Activated T-helper 1 cell treated with anti-CD3 and anti-CD28 coated beads, Interleukin-12 subunit alpha, Interleukin-12 subunit beta, Interleukin-2, Interleukin-4 antibody, amounts not matched to agents 30 ng/mL and 10 ng/mL and 1 ng/mL, durations not matched to agents 14 hours and 24 hours and 36 hours (primary cell): ENCODE measurements at regions of chr6 and their contacts with region 1.

Region 1: GRCh38 chr6:593139-593906 is 63.6 kb downstream of the HUS1B start:
- DNase-seq: peak; percentile 39
- H3K4me3 Mint-ChIP-seq: no peak overlapping the region
- H3K27ac Mint-ChIP-seq: no peak overlapping the region
- H3K4me1 Mint-ChIP-seq: peaks cover 13% of the 10 kb centered on the region
- H3K27me3 Mint-ChIP-seq: no peaks in the 10 kb centered on the region

Region 2: GRCh38 chr6:453152-453551 is 140.2 kb before region 1 on chr6:
- intact Hi-C with region 1: no loop called
- DNase-seq: no peak
- H3K4me3 Mint-ChIP-seq: no peak overlapping the region
- H3K27ac Mint-ChIP-seq: no peak overlapping the region
- H3K4me1 Mint-ChIP-seq: peaks cover 28% of the 10 kb centered on the region
- H3K27me3 Mint-ChIP-seq: no peaks in the 10 kb centered on the region

Region 3: DNA sequence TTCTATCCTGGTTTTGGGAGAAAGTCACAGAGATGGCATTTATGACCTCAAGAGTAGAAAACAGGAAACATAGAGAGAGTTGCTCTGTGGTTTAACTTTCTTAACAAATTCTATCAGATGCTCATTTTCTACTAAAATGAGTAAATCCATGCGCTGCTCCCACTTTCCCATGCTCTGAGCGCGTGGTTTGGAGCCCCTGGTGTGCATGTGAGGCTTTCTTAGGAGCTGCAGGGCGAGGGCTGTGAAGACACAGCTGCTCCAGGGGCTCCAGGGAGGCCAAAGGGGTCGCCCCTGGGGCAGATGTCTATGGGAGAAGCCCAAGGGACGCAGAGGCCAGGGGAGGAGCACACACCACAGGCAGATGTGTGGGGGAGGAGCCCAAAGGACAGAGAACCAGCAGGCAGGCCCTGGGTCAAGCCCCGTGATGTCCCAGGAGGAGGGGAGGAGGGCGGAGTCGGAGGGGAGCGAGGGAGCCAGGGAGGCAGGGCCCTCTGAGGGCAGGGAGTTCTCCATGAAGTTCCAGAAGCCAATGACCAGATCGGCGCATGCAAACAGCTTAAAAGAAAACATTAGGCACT is 78.8 kb before region 1 on chr6:
- intact Hi-C with region 1: no loop called
- DNase-seq: no peak
- H3K4me3 Mint-ChIP-seq: peak overlapping the region; percentile 51
- H3K27ac Mint-ChIP-seq: peak overlapping the region; percentile 90
- H3K4me1 Mint-ChIP-seq: peaks cover 67% of the 10 kb centered on the region
- H3K27me3 Mint-ChIP-seq: no peaks in the 10 kb centered on the region

Region 4: GRCh38 chr6:658244-658643 is 64.9 kb after region 1 on chr6:
- intact Hi-C with region 1: no loop called
- DNase-seq: no peak
- H3K4me3 Mint-ChIP-seq: no peak overlapping the region
- H3K27ac Mint-ChIP-seq: no peak overlapping the region
- H3K4me1 Mint-ChIP-seq: peaks cover 46% of the 10 kb centered on the region
- H3K27me3 Mint-ChIP-seq: no peaks in the 10 kb centered on the region

Region 5: DNA sequence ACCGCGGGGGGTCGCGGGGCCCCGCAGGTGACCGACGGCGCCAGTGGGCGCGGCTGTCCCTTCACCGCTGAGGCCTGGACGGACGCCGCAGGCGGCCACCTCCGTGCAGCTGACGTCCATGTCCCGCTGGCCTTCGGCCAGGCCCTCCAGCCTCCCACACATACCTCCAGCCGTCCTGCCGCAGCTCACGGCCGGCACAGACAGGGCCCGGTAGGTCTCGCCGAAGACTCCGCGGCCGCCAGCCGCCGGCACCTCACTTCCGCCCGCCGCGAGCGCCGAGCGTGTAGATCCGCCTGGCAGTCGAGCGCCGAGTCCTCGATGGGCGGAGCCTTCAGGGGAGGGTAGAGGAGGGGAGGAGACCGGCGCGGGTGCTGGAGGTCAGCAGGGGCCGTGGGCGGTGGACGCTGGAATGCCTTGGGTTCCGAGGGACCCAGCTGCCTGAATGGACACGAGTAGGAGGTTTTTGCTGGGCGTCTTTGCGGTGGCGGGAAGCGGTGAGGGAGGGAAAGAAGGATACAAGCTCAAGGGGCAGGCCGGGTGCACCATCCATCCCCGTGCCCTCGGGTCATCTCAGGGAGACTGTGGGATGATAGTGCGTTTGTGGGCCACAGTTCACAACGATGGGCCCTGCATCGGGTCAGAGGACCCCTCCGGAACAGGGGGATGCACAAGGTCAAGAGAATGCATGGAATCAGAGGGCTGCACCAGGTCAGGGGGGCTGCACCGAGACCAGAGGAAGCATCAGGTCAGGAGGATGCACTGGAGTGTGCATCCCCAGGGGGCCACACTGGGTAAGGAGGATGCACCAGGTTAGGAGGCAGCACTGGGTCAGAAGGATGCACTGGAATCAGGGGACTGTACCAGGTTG is 99.8 kb after region 1 on chr6 and contains the start of gene EXOC2:
- intact Hi-C with region 1: loop called (anchors 5 kb)
- DNase-seq: peak; percentile 86
- H3K4me3 Mint-ChIP-seq: peak within 1 kb of the TSS; percentile 95
- H3K27ac Mint-ChIP-seq: peak within 1 kb of the TSS; percentile 93
- H3K4me1 Mint-ChIP-seq: peaks cover 31% of the 10 kb centered on the region
- H3K27me3 Mint-ChIP-seq: no peaks in the 10 kb centered on the region
- total RNA-seq, gene EXOC2: 44.5 and 47.1 TPM in 2 replicates

Region 6: DNA sequence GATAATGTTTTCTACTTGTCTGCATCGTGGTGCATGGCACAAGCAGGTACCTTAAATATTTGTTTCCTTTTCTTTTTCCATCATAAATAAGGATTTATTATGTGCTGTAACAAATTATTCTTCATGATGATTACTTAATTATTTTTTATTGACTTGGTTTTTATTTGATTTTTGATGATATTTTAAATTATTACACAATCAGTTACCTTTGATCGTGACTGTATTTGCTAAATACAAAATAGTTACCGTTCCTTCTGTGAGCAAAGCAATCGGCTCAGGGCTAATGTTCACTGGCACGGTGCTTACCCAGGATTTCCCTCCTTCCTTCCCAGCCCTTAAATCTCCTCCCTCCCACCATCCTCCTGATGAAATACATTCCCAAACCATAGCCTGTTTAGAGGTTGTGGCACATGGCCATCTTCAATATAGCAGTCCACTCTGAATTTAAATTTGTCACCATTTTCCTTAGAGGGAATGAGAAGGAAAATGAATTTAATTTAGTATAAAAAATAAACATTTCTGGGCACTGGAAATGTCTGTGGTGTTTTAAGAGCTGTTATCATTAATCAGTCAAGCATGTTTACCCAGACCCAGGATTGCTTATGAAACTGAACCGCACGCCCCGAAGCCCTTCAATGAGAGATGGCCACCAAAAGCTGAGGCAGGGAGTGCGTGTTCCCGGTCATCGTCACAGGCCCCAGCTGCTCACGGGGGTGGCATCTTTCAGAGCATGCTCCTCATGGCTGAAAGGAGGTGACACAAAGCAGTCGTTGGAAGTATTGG is 122.6 kb after region 1 on chr6:
- intact Hi-C with region 1: no loop called
- DNase-seq: no peak
- H3K4me3 Mint-ChIP-seq: no peak overlapping the region
- H3K27ac Mint-ChIP-seq: no peak overlapping the region
- H3K4me1 Mint-ChIP-seq: peaks cover 19% of the 10 kb centered on the region
- H3K27me3 Mint-ChIP-seq: no peaks in the 10 kb centered on the region

Region 7: GRCh38 chr6:786946-787763 is 193.8 kb after region 1 on chr6:
- intact Hi-C with region 1: loop called (anchors 2 kb)
- DNase-seq: no peak
- H3K4me3 Mint-ChIP-seq: no peak overlapping the region
- H3K27ac Mint-ChIP-seq: no peak overlapping the region
- H3K4me1 Mint-ChIP-seq: peaks cover 19% of the 10 kb centered on the region
- H3K27me3 Mint-ChIP-seq: peaks cover 8% of the 10 kb centered on the region

Region 8: GRCh38 chr6:903761-904160 is 310.4 kb after region 1 on chr6:
- intact Hi-C with region 1: loop called (anchors 10 kb)
- DNase-seq: no peak
- H3K4me3 Mint-ChIP-seq: no peak overlapping the region
- H3K27ac Mint-ChIP-seq: no peak overlapping the region
- H3K4me1 Mint-ChIP-seq: no peaks in the 10 kb centered on the region
- H3K27me3 Mint-ChIP-seq: peaks cover 6% of the 10 kb centered on the region

Region 9: GRCh38 chr6:1396952-1397868 is 803.9 kb after region 1 on chr6:
- intact Hi-C with region 1: loop called (anchors 1 kb)
- DNase-seq: peak; percentile 42
- H3K4me3 Mint-ChIP-seq: no peak overlapping the region
- H3K27ac Mint-ChIP-seq: no peak overlapping the region
- H3K4me1 Mint-ChIP-seq: peaks cover 5% of the 10 kb centered on the region
- H3K27me3 Mint-ChIP-seq: peaks cover 53% of the 10 kb centered on the region

Region 10: DNA sequence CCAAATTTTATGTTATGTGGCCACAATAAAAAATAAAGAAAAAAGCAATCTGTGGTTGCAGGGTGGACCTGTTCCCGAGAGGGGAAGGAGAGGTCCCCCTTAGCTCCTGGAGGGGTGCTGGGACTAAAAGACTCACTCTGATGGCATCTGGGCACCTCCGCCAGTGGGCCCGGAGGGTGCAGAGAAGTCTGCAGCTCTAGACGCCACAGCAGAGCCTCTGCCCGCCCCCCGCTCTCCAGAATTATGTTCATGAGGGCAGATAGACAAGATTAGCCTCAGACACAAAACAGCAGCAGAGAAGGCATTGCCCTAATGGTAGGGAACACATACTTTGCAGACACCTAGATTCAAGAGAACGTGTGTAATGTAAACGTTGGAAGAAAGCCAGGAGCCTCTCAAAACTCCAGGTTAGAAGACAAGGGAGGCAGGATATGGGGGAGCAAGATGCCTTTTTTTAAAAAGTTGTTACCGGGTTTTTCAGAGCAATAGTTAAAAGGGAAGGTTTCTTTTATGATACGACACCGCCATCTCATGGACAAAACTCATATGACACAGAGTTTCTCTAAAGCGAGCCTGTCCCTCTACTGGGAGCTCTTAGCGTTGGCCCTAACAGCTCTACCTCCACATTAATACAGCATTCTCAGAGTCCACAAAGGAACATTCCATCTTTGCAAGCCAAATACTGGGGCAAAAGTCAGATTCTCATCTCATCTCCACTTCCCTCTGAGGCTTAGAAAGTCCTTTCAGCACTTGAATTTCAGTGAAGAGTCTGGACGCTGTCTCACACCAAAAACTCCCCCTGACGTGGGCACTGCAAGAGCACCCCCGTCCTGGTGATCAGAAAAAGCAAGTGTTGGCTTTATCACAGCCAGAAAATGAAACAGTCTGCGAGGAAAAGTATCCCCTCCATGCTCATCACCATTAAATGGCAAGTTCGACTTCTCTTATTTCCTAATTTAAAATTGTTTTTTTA is 843.3 kb after region 1 on chr6:
- intact Hi-C with region 1: loop called (anchors 1 kb)
- DNase-seq: peak; percentile 39
- H3K4me3 Mint-ChIP-seq: no peak overlapping the region
- H3K27ac Mint-ChIP-seq: no peak overlapping the region
- H3K4me1 Mint-ChIP-seq: no peaks in the 10 kb centered on the region
- H3K27me3 Mint-ChIP-seq: peaks cover 26% of the 10 kb centered on the region